Activated CD4-positive, alpha-beta T cell treated with anti-CD3 and anti-CD28 coated beads for 36 hours (primary cell): ENCODE measurements at regions of chr20 and their contacts with region 1.

Region 1: GRCh38 chr20:58980700-58981627 is at the start of gene NELFCD:
- DNase-seq: peak; percentile 94
- ATAC-seq: peak; percentile 87
- H3K4me3 Mint-ChIP-seq: peak within 1 kb of the TSS; percentile 85
- H3K27ac Mint-ChIP-seq: peak within 1 kb of the TSS; percentile 89
- H3K4me1 Mint-ChIP-seq: peaks cover 32% of the 10 kb centered on the region
- H3K27me3 Mint-ChIP-seq: no peaks in the 10 kb centered on the region
- total RNA-seq, gene NELFCD: 111 to 121 TPM

Region 2: GRCh38 chr20:58907399-58908137 is 73.4 kb before region 1 on chr20:
- CTCF ChIA-PET with region 1: no interaction called
- POLR2A ChIA-PET with region 1: no interaction called
- intact Hi-C with region 1: loop called in 1 of 2 experiments (anchors 5 kb)
- DNase-seq: peak; percentile 70
- ATAC-seq: peak; percentile 77
- H3K4me3 Mint-ChIP-seq: peak overlapping the region; percentile 48
- H3K27ac Mint-ChIP-seq: peak overlapping the region; percentile 92
- H3K4me1 Mint-ChIP-seq: peaks cover 49% of the 10 kb centered on the region
- H3K27me3 Mint-ChIP-seq: no peaks in the 10 kb centered on the region

Region 3: DNA sequence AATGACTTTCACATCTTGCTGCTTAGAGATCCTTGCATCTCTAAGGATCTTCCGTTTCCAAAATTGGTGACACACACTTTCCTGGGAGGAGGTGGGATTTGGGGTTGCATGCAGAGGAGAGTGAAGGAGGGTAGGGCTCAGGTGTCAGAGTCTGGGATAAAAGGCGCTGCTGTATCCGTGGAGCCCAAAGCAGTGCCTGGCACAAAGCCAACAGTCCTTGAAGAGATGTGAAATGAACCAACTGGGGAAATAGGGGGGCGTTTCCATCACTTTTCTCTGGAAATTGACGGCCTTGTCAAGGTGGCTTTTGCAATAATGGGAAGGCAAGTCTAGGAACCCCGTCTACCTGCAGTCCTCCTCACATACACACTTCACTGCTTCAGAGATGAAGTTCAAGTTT is 59.4 kb before region 1 on chr20:
- CTCF ChIA-PET with region 1: no interaction called
- POLR2A ChIA-PET with region 1: no interaction called
- intact Hi-C with region 1: no loop called
- DNase-seq: no peak
- ATAC-seq: no peak
- H3K4me3 Mint-ChIP-seq: no peak overlapping the region
- H3K27ac Mint-ChIP-seq: no peak overlapping the region
- H3K4me1 Mint-ChIP-seq: no peaks in the 10 kb centered on the region
- H3K27me3 Mint-ChIP-seq: no peaks in the 10 kb centered on the region

Region 4: GRCh38 chr20:59006864-59007664 is 26.1 kb after region 1 on chr20 and contains the start of gene CTSZ:
- CTCF ChIA-PET with region 1: no interaction called
- POLR2A ChIA-PET with region 1: interaction called, 5 read pairs
- intact Hi-C with region 1: loop called in 1 of 2 experiments (anchors 1 kb)
- DNase-seq: peak; percentile 70
- ATAC-seq: peak; percentile 68
- H3K4me3 Mint-ChIP-seq: peak within 1 kb of the TSS; percentile 69
- H3K27ac Mint-ChIP-seq: peak within 1 kb of the TSS; percentile 69
- H3K4me1 Mint-ChIP-seq: peaks cover 34% of the 10 kb centered on the region
- H3K27me3 Mint-ChIP-seq: no peaks in the 10 kb centered on the region
- total RNA-seq, gene CTSZ: 26.6 to 29.4 TPM

Region 5: GRCh38 chr20:59042796-59043660 is 62.1 kb after region 1 on chr20:
- CTCF ChIA-PET with region 1: interaction called, 3 read pairs
- POLR2A ChIA-PET with region 1: no interaction called
- intact Hi-C with region 1: loop called (anchors 1 to 2 kb)
- DNase-seq: peak; percentile 97
- ATAC-seq: peak; percentile 97
- H3K4me3 Mint-ChIP-seq: peak overlapping the region; percentile 90
- H3K27ac Mint-ChIP-seq: peak overlapping the region; percentile 89
- H3K4me1 Mint-ChIP-seq: peaks cover 48% of the 10 kb centered on the region
- H3K27me3 Mint-ChIP-seq: no peaks in the 10 kb centered on the region

Region 6: GRCh38 chr20:59074445-59074844 is 93.5 kb after region 1 on chr20:
- CTCF ChIA-PET with region 1: no interaction called
- POLR2A ChIA-PET with region 1: no interaction called
- intact Hi-C with region 1: loop called in 1 of 2 experiments (anchors 1 kb)
- DNase-seq: peak; percentile 31
- ATAC-seq: peak; percentile 79
- H3K4me3 Mint-ChIP-seq: no peak overlapping the region
- H3K27ac Mint-ChIP-seq: no peak overlapping the region
- H3K4me1 Mint-ChIP-seq: peaks cover 52% of the 10 kb centered on the region
- H3K27me3 Mint-ChIP-seq: peaks cover 18% of the 10 kb centered on the region

Region 7: DNA sequence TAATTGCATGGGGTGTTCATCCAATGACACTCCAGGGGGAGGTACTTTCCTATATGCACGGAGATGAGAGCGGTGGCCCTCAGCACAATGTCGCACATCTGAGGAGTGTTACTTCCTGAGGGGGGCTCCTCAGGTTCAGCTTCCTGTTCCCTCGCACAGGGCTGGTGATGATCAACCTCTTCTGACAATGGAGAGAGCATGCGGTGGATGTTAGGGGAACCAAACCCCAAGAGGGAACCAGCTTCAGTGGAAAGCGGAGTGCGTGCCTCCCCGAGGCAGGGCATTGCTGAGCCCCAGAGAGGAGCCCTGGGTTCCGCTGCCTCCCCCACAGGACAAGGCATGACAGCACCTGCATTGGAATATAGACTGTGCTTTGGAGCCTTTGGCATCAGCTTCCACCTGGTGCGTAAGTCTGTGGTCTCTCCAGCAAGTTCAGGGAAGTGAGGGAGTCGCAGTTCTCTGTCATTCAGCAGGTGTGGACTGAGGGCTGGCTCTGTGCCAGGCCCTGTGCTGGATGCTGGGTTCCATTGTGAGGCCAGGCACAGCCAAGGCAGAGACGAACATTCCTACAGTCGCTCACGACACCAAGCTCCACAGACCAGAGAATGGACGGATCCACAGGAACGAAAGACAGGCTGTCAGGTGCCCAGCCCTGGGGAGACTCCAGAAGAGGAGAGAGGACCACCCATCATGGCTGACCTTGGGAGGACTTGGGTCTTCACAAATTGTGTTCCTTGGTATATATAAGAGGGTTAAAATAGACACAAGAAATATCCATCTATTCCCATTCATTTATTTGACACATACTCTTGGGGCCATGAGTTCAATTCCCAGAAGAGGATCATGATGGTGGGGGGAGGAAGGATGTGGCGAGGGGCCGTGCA is 178.8 kb after region 1 on chr20:
- CTCF ChIA-PET with region 1: no interaction called
- POLR2A ChIA-PET with region 1: no interaction called
- intact Hi-C with region 1: loop called in 1 of 2 experiments (anchors 1 kb)
- DNase-seq: peak; percentile 75
- ATAC-seq: peak; percentile 83
- H3K4me3 Mint-ChIP-seq: peak overlapping the region; percentile 80
- H3K27ac Mint-ChIP-seq: peak overlapping the region; percentile 97
- H3K4me1 Mint-ChIP-seq: peaks cover 82% of the 10 kb centered on the region
- H3K27me3 Mint-ChIP-seq: no peaks in the 10 kb centered on the region